BJ (cell line): ENCODE measurements at regions of chr17 and their contacts with region 1.

Region 1: GRCh38 chr17:47889734-47890529 is 6.1 kb upstream of the SP2 start:
- DNase-seq: no peak
- H3K4me3 ChIP-seq: no peak overlapping the region
- H3K27me3 ChIP-seq: no peaks in the 10 kb centered on the region
- CTCF ChIP-seq: peak; percentile 94

Region 2: GRCh38 chr17:47604598-47604927 is 285.4 kb before region 1 on chr17:
- CTCF ChIA-PET with region 1: no interaction called
- POLR2A ChIA-PET with region 1: no interaction called
- DNase-seq: no peak
- H3K4me3 ChIP-seq: no peak overlapping the region
- H3K27me3 ChIP-seq: no peaks in the 10 kb centered on the region
- CTCF ChIP-seq: no peak

Region 3: GRCh38 chr17:47850692-47851573 is 39.0 kb before region 1 on chr17 and contains the start of gene SP6:
- CTCF ChIA-PET with region 1: interaction called, 875 read pairs
- POLR2A ChIA-PET with region 1: no interaction called
- DNase-seq: no peak
- H3K4me3 ChIP-seq: peak within 1 kb of the TSS; percentile 12
- H3K27me3 ChIP-seq: peaks cover 42% of the 10 kb centered on the region
- CTCF ChIP-seq: 0 out of 2 replicates have a peak, but pooled peaks have one; percentile 20
- polyA plus RNA-seq, gene SP6: 0.05 and 0.07 TPM in 2 replicates

Region 4: DNA sequence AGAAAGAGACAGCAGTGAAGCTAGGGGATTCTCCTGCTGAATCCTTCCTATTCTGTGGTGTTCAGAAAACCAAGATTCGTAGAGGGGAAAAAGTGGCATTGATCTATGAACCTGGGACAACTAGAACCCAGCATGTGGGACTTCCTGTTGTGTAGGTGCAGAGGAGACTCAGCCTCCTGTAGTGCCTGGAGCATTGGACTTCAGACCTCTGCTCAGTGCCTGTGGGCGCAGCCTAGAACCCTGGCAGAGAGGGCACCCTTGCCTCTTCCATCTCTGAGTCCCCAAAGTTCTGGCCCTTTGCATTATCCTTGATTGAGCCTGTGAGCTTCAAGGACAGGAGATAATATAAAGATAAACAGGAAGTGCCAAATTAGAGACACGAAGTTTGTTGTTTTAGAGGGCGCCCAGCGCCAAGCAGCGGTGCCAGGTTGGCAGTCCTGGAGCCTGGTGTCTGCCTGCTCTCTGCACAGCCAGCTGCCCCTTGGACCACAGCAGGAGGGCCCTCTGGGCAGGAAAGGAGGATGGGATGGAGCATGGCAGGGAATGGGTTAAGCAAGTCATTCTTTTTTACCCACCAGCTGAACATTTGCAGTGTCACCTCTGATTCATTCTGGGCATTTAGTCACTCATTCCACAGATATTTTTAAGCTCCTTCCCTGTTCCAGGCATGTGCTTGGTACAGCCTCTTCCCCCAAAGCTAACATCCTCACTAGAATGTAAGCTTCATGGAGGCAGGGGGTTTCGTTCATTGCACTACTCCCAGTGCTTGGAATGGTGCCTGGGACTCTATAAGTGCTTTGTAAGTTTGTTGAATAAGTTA is 27.1 kb before region 1 on chr17:
- CTCF ChIA-PET with region 1: interaction called, 33 read pairs
- POLR2A ChIA-PET with region 1: no interaction called
- DNase-seq: peak; percentile 54
- H3K4me3 ChIP-seq: no peak overlapping the region
- H3K27me3 ChIP-seq: no peaks in the 10 kb centered on the region
- CTCF ChIP-seq: no peak

Region 5: GRCh38 chr17:47875011-47875944 is 14.7 kb before region 1 on chr17:
- CTCF ChIA-PET with region 1: interaction called, 13 read pairs
- POLR2A ChIA-PET with region 1: no interaction called
- DNase-seq: no peak
- H3K4me3 ChIP-seq: no peak overlapping the region
- H3K27me3 ChIP-seq: peaks cover 10% of the 10 kb centered on the region
- CTCF ChIP-seq: no peak

Region 6: DNA sequence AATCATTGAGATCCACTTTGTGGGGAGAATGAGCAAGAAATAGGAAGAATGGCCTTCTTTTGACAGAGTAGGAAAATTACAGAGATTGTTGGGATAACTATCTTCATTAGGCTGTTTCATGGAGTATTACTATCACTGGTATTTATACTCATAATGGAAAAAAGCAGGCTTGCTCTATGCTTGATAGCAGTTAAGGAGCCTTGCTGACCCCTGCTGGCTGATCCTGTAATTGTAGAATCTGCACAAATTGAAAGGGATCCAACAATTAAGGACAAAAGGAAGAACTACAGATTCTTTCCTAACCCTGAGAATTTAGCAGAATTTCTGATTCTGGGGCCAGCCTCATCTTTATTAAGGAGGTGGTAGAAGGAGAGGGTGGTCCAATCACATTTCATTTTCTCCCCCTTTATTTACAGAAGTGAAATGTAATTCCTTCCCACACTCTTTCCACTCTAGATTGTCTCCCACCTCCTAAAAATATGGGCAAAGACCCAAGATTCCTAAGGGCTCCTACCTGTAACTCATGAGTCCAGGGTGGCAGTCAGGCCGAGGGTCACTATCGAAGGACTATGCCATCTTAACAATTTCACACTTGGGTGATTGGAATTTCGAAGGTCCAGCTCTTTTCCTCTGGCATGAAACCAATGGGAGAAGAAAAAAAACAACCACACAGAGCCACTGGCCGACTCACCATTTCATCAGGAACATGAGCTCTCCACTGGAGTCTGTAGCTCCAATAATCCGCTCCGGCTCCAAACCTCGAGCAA is 184.6 kb after region 1 on chr17:
- CTCF ChIA-PET with region 1: no interaction called
- POLR2A ChIA-PET with region 1: no interaction called
- DNase-seq: no peak
- H3K4me3 ChIP-seq: no peak overlapping the region
- H3K27me3 ChIP-seq: no peaks in the 10 kb centered on the region
- CTCF ChIP-seq: peak; percentile 81